ENCODE measurements at regions of chr14 and their contacts with region 1.

Region 1: GRCh38 chr14:45125754-45126153 is 8.5 kb downstream of the FKBP3 start:
- DNase-seq: no peak
- H3K4me3 ChIP-seq: no peak overlapping the region
- H3K27ac ChIP-seq: no peak overlapping the region
- H3K4me1 ChIP-seq: no peaks in the 10 kb centered on the region
- H3K27me3 ChIP-seq: no peaks in the 10 kb centered on the region
- CTCF ChIP-seq: no peak

Region 2: DNA sequence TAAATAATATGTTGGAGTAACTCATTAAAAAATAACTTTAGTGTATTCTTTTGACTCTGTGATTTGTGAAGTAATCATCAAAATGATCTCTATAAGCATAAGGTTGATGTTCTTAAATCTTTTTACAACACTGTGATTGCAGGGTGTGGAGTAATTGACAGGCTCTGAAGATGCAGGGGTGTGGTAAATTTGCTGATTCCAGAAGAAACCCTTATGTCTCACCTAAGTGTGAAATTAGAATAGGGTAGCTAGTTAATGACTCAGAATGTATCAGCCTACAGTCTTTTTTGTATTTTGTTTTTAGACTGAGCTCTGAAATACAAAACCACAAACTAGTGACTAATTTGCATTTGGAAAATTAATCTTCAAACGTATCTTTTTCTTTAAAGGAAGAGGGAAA is 35.9 kb before region 1 on chr14:
- intact Hi-C with region 1: loop called (anchors 5 kb)
- DNase-seq: no peak
- H3K4me3 ChIP-seq: no peak overlapping the region
- H3K27ac ChIP-seq: no peak overlapping the region
- H3K4me1 ChIP-seq: no peaks in the 10 kb centered on the region
- H3K27me3 ChIP-seq: no peaks in the 10 kb centered on the region
- CTCF ChIP-seq: no peak

Region 3: DNA sequence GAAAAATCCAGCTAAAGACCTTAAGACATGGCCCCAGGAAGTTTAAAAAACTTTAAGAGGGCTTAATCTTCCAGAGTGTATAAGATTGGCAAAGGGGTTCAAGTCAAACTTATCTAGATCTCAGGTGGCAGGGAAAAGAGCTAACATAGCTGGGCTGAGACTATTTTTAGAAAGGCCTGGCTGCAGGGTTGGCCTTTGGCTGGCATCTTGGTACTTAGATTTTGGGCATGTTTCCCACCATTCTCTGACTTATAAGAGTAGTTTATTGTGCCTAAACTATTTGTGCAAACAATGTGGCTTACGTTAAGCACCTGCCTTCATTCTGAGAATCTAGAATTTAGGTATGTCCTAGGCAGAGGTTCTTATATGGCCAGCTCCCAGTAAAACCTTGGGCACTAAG is 341.3 kb after region 1 on chr14:
- intact Hi-C with region 1: no loop called
- DNase-seq: no peak
- H3K4me3 ChIP-seq: no peak overlapping the region
- H3K27ac ChIP-seq: no peak overlapping the region
- H3K4me1 ChIP-seq: no peaks in the 10 kb centered on the region
- H3K27me3 ChIP-seq: no peaks in the 10 kb centered on the region
- CTCF ChIP-seq: no peak

Measured in colonic mucosa (tissue), 4 donors.